Panc1 (cell line): ENCODE measurements at regions of chr19 and their contacts with region 1.

Region 1: GRCh38 chr19:16688084-16688483 is 27.1 kb downstream of the TMEM38A start:
- DNase-seq: no peak
- ATAC-seq: no peak
- H3K4me3 ChIP-seq: no peak overlapping the region
- H3K27ac ChIP-seq: no peak overlapping the region
- H3K4me1 ChIP-seq: peaks cover 4% of the 10 kb centered on the region; the same call in 1 of the 2 replicates
- H3K27me3 ChIP-seq: no peaks in the 10 kb centered on the region
- CTCF ChIP-seq: no peak

Region 2: DNA sequence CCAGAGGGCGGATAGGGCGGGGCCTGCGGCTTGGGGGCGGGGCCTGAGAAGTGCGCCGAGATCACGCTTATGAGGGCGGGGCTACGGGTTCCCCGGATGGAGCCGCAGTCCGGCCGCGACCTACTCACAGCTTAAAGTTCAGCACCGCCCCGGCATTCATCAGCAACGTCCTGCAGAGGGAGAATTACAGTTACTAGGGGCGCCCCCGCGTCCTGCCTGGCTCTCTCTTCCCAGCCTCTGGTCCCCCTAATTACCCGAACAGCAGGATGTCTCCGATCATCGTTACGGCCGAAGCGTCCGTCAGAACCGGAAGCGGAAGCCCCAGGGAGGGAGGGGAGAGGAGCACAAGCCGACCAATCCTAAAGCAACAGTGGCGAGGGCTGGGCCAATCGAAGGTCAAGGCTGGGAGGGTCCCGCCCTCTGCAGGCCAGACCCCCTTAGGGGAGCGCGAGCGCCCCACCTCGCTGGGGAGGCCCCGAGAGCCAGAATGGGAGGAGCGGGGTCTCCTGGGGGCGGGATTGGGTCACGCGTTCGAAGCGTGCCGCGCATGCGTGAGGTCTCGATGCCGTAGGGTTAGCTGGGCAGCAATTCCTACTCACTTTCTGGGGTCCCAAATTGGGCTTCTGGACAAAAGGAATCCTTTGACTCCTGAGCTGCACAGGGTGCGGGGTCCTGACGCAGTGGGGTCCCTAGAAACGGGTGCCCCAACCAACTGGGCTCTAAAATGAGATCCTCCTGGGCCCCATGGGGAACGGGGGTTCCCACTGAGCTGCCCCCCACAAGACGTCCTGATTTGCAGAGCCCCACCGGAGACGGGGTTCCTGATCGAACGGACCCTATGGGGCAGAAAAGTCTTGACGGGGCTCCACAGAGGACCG is 28.0 kb before region 1 on chr19 and contains the start of gene SMIM7:
- CTCF ChIA-PET with region 1: no interaction called
- POLR2A ChIA-PET with region 1: interaction called, 18 read pairs
- in situ Hi-C with region 1: no loop called
- intact Hi-C with region 1: no loop called
- DNase-seq: peak; percentile 90
- ATAC-seq: peak; percentile 98
- H3K4me3 ChIP-seq: peak within 1 kb of the TSS; percentile 89 to 92
- H3K27ac ChIP-seq: peak within 1 kb of the TSS; percentile 91
- H3K4me1 ChIP-seq: no peaks in the 10 kb centered on the region; the same call in 1 of the 2 replicates
- H3K27me3 ChIP-seq: no peaks in the 10 kb centered on the region
- CTCF ChIP-seq: no peak
- total RNA-seq, gene SMIM7: 70.7 TPM